HepG2 (cell line): ENCODE measurements at regions of chr10 and their contacts with region 1.

Region 1: GRCh38 chr10:5446390-5446926 is 34.1 kb downstream of the NET1 start:
- DNase-seq: peak; percentile 89
- ATAC-seq: peak; percentile 95
- H3K4me3 ChIP-seq: peak overlapping the region; percentile 74 to 96 (median 77)
- H3K27ac ChIP-seq: peak overlapping the region; percentile 71
- H3K4me1 ChIP-seq: peaks cover 18% of the 10 kb centered on the region
- H3K27me3 ChIP-seq: no peaks in the 10 kb centered on the region; a peak in 1 of 5 replicates
- CTCF ChIP-seq: peak; percentile 35; the same call in 1 of the 2 replicates
- EP300 ChIP-seq: peak in 1 of 2 experiments; percentile 28; a peak in 1 of 4 replicates
- POLR2A ChIP-seq: peak; percentile 98 to 100
- RAD21 ChIP-seq: peak; percentile 63

Region 2: GRCh38 chr10:4941540-4942330 is 504.7 kb before region 1 on chr10:
- CTCF ChIA-PET with region 1: no interaction called
- POLR2A ChIA-PET with region 1: no interaction called
- in situ Hi-C with region 1: no loop called
- intact Hi-C with region 1: no loop called
- DNase-seq: peak; percentile 78
- ATAC-seq: peak; percentile 29
- H3K4me3 ChIP-seq: no peak overlapping the region
- H3K27ac ChIP-seq: peak overlapping the region; percentile 88
- H3K4me1 ChIP-seq: peaks cover 90% of the 10 kb centered on the region
- H3K27me3 ChIP-seq: no peaks in the 10 kb centered on the region
- CTCF ChIP-seq: no peak
- EP300 ChIP-seq: peak in 1 of 2 experiments; percentile 71; a peak in 2 of 4 replicates
- POLR2A ChIP-seq: no peak
- RAD21 ChIP-seq: no peak

Region 3: DNA sequence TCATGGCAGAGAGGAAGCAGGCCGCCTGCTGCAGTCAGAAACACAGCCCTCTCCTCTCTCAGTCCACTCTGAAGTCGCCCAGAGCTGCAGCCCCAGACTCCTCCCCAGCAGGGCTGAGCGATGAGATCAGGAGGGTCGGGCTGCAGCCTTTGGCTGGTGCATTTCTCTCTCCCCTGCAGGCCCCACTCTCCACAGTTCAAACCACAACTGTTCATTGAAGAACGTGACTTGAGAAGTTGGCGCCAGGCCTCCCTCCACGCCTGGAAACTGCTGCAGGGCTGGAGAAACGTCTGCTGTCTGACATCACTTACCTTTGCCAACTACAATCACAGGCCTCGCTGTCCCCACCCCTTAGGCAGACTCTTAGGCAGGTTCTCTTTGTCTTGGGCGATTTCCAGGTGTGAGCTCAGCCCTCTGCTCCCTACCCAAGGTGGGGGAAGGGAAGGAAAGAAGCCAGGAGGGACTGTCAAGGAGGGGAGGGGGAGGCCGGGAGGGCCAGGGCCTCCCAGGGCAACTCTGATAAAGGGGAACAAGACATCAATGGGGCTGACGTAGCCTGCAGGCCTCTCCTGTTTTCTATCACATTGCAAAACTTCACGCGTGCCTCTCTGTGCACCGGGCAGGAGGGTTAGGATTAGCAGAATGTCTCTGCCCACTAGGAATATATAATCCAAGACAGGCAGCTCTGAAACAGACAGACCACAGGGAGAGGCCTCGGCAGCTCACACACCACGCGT is 20.1 kb after region 1 on chr10:
- CTCF ChIA-PET with region 1: no interaction called
- POLR2A ChIA-PET with region 1: interaction called, 12 read pairs
- in situ Hi-C with region 1: no loop called
- intact Hi-C with region 1: no loop called
- DNase-seq: peak; percentile 37
- ATAC-seq: peak; percentile 83
- H3K4me3 ChIP-seq: peak overlapping the region; percentile 41 to 65 (median 46)
- H3K27ac ChIP-seq: peak overlapping the region; percentile 37
- H3K4me1 ChIP-seq: peaks cover 43% of the 10 kb centered on the region
- H3K27me3 ChIP-seq: no peaks in the 10 kb centered on the region; a peak in 2 of 5 replicates
- CTCF ChIP-seq: no peak
- EP300 ChIP-seq: no peak
- POLR2A ChIP-seq: peak; percentile 47 to 54; a peak in 1 of 4 replicates
- RAD21 ChIP-seq: no peak

Region 4: DNA sequence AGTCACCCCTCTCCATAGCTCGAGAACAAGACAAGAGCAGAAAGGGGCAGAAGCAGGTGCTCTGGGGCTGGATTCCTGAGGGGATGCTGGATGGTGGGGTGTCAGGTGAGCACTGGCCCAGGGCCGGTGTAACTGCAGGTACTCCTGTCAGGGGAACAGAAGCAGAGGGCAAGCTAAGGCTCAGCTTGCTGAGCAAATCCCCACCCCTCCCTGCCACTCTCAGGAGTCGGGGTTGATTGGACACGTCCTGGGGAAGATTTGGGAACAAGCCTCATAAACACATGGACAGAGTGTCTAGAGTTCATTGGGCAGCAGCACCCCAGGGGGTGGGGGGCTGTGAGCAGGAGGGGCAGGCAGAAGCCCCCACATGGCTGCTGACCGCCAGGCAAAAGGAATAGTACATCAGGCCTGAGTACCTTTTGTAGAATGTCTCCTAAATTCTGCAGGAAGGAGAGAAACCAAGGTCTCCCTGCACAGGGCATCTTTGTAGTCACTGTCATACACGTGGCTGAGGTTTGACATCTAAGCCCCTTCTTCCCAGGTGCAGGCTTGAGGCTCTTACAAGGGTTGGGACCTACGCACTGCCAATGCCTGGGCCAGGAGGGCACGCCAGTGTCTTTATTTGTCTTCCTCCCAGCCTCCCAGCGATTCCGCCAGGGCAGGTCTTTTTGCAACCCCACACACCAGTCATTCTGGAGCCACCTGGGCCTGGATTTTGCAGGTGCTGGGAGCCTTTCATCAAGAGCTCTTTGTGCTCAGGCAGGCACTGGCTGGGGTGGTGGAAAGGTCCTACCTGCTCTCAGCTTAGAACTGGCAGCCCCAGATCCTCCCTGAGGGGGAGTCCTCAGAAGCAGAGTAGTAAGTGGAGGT is 81.1 kb after region 1 on chr10:
- CTCF ChIA-PET with region 1: no interaction called
- POLR2A ChIA-PET with region 1: interaction called, 17 read pairs
- in situ Hi-C with region 1: no loop called
- intact Hi-C with region 1: no loop called
- DNase-seq: peak; percentile 50
- ATAC-seq: peak; percentile 44
- H3K4me3 ChIP-seq: no peak overlapping the region
- H3K27ac ChIP-seq: peak overlapping the region; percentile 34
- H3K4me1 ChIP-seq: peaks cover 94% of the 10 kb centered on the region
- H3K27me3 ChIP-seq: no peaks in the 10 kb centered on the region
- CTCF ChIP-seq: no peak
- EP300 ChIP-seq: no peak
- POLR2A ChIP-seq: no peak
- RAD21 ChIP-seq: no peak

Region 5: GRCh38 chr10:5555021-5555510 is 108.6 kb after region 1 on chr10:
- CTCF ChIA-PET with region 1: no interaction called
- POLR2A ChIA-PET with region 1: interaction called, 11 read pairs
- in situ Hi-C with region 1: no loop called
- intact Hi-C with region 1: no loop called
- DNase-seq: no peak
- ATAC-seq: no peak
- H3K4me3 ChIP-seq: no peak overlapping the region
- H3K27ac ChIP-seq: peak overlapping the region; percentile 68
- H3K4me1 ChIP-seq: peaks cover 87% of the 10 kb centered on the region
- H3K27me3 ChIP-seq: no peaks in the 10 kb centered on the region
- CTCF ChIP-seq: no peak
- EP300 ChIP-seq: no peak
- POLR2A ChIP-seq: no peak
- RAD21 ChIP-seq: no peak

Region 6: GRCh38 chr10:5623081-5623748 is 176.8 kb after region 1 on chr10:
- CTCF ChIA-PET with region 1: interaction called, 31 read pairs
- POLR2A ChIA-PET with region 1: interaction called, 37 read pairs
- in situ Hi-C with region 1: loop called (anchors 5 kb)
- intact Hi-C with region 1: loop called (anchors 1 kb)
- DNase-seq: peak; percentile 74
- ATAC-seq: peak; percentile 86
- H3K4me3 ChIP-seq: peak overlapping the region in 2 of 3 experiments; percentile 38 to 68; a peak in 2 of 6 replicates
- H3K27ac ChIP-seq: no peak overlapping the region
- H3K4me1 ChIP-seq: peaks cover 54% of the 10 kb centered on the region
- H3K27me3 ChIP-seq: no peaks in the 10 kb centered on the region; a peak in 1 of 5 replicates
- CTCF ChIP-seq: peak; percentile 100
- EP300 ChIP-seq: no peak; a peak in 1 of 4 replicates
- POLR2A ChIP-seq: no peak
- RAD21 ChIP-seq: peak; percentile 99